ENCODE measurements at regions of chrX and their contacts with region 1.

Region 1: GRCh38 chrX:137194164-137194563 is 160.4 kb upstream of the GPR101 start:
- DNase-seq: peak; percentile 61
- H3K4me3 Mint-ChIP-seq: no peak overlapping the region
- H3K27ac Mint-ChIP-seq: no peak overlapping the region
- H3K4me1 Mint-ChIP-seq: peaks cover 8% of the 10 kb centered on the region
- H3K27me3 Mint-ChIP-seq: peaks cover 12% of the 10 kb centered on the region
- CTCF ChIP-seq: peak; percentile 60

Region 2: GRCh38 chrX:136687457-136687856 is 506.7 kb before region 1 on chrX:
- CTCF ChIA-PET with region 1: no interaction called
- POLR2A ChIA-PET with region 1: no interaction called
- intact Hi-C with region 1: no loop called
- DNase-seq: no peak
- H3K4me3 Mint-ChIP-seq: no peak overlapping the region
- H3K27ac Mint-ChIP-seq: no peak overlapping the region
- H3K4me1 Mint-ChIP-seq: no peaks in the 10 kb centered on the region
- H3K27me3 Mint-ChIP-seq: peaks cover 42% of the 10 kb centered on the region
- CTCF ChIP-seq: no peak

Region 3: GRCh38 chrX:136920001-136920400 is 274.2 kb before region 1 on chrX:
- CTCF ChIA-PET with region 1: no interaction called
- POLR2A ChIA-PET with region 1: no interaction called
- intact Hi-C with region 1: no loop called
- DNase-seq: no peak
- H3K4me3 Mint-ChIP-seq: no peak overlapping the region
- H3K27ac Mint-ChIP-seq: no peak overlapping the region
- H3K4me1 Mint-ChIP-seq: no peaks in the 10 kb centered on the region
- H3K27me3 Mint-ChIP-seq: no peaks in the 10 kb centered on the region
- CTCF ChIP-seq: no peak

Region 4: GRCh38 chrX:137151403-137151802 is 42.8 kb before region 1 on chrX:
- CTCF ChIA-PET with region 1: interaction called, 11 read pairs
- POLR2A ChIA-PET with region 1: no interaction called
- intact Hi-C with region 1: no loop called
- DNase-seq: no peak
- H3K4me3 Mint-ChIP-seq: no peak overlapping the region
- H3K27ac Mint-ChIP-seq: no peak overlapping the region
- H3K4me1 Mint-ChIP-seq: no peaks in the 10 kb centered on the region
- H3K27me3 Mint-ChIP-seq: peaks cover 49% of the 10 kb centered on the region
- CTCF ChIP-seq: peak; percentile 15

Region 5: GRCh38 chrX:137166591-137166990 is 27.6 kb before region 1 on chrX:
- CTCF ChIA-PET with region 1: interaction called, 9 read pairs
- POLR2A ChIA-PET with region 1: interaction called, 3 read pairs
- intact Hi-C with region 1: loop called (anchors 2 kb)
- DNase-seq: peak; percentile 38
- H3K4me3 Mint-ChIP-seq: no peak overlapping the region
- H3K27ac Mint-ChIP-seq: no peak overlapping the region
- H3K4me1 Mint-ChIP-seq: peaks cover 7% of the 10 kb centered on the region
- H3K27me3 Mint-ChIP-seq: peaks cover 27% of the 10 kb centered on the region
- CTCF ChIP-seq: peak; percentile 37